Ascending aorta (tissue), 2 donors: ENCODE measurements at regions of chr13 and their contacts with region 1.

Region 1: GRCh38 chr13:109256866-109257760 is 529.3 kb downstream of the IRS2 start:
- DNase-seq: peak in 1 of 2 donors; percentile 80
- H3K4me3 ChIP-seq: no peak overlapping the region
- H3K27ac ChIP-seq: peak overlapping the region; percentile 55 to 56
- H3K4me1 ChIP-seq: peaks cover 3% of the 10 kb centered on the region in 2 donors
- H3K27me3 ChIP-seq: no peaks in the 10 kb centered on the region
- CTCF ChIP-seq: no peak

Region 2: DNA sequence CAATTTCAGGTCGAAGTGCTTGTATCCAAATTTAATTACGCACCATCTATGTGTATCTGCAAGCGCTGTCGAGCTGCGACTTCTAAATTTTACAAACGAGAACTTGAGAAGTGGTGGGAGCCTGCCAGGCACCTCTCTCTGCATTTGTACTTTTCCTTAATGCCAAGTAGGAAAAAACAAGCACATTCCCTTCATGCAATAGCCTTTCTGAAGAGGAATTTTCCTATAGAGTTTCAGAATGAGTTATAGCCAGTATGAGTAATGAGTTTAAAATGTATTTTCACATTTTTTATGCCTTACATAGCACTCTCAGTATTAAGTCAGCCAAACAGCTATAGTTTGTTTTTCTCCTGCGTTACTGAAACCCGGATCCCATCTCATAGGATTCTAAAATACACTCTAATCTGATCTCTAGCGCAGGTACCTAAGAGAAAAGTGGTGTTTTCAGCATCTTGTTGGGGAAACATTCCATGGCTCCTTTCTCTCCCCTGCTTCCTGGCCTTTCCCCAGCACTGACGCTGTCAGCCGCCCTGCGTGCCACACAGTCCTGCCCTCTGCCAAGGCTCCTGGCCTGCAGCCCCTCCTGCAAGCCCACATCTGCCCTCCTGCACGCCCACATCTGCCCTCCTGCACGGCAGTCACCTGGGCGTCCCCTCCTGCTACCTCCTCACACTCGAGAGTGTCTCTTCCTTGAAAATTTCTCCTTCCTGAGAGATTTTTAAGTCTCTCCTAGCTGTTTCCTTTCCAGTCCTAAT is 100.8 kb before region 1 on chr13:
- intact Hi-C with region 1: loop called (anchors 1 kb)
- DNase-seq: peak in 1 of 2 donors; percentile 81
- H3K4me3 ChIP-seq: peak overlapping the region; percentile 23 to 30
- H3K27ac ChIP-seq: peak overlapping the region; percentile 70 to 72
- H3K4me1 ChIP-seq: peaks cover 0 to 18% of the 10 kb centered on the region in 2 donors
- H3K27me3 ChIP-seq: no peaks in the 10 kb centered on the region
- CTCF ChIP-seq: no peak

Region 3: GRCh38 chr13:109297628-109298027 is 40.5 kb after region 1 on chr13:
- intact Hi-C with region 1: no loop called
- DNase-seq: no peak
- H3K4me3 ChIP-seq: no peak overlapping the region
- H3K27ac ChIP-seq: no peak overlapping the region
- H3K4me1 ChIP-seq: no peaks in the 10 kb centered on the region
- H3K27me3 ChIP-seq: no peaks in the 10 kb centered on the region
- CTCF ChIP-seq: no peak